ENCODE measurements at regions of chr4 and their contacts with region 1.

Region 1: GRCh38 chr4:48681856-48682255 is 98.2 kb downstream of the FRYL start:
- DNase-seq: peak in 4 of 14 experiments; percentile 29 to 62 (median 57)
- ATAC-seq: peak; percentile 68
- H3K4me3 ChIP-seq: no peak overlapping the region
- H3K4me3 Mint-ChIP-seq: no peak overlapping the region
- H3K27ac ChIP-seq: no peak overlapping the region
- H3K27ac Mint-ChIP-seq: peak overlapping the region; percentile 35
- H3K4me1 ChIP-seq: no peaks in the 10 kb centered on the region
- H3K4me1 Mint-ChIP-seq: peaks cover 51% of the 10 kb centered on the region
- H3K27me3 ChIP-seq: no peaks in the 10 kb centered on the region
- H3K27me3 Mint-ChIP-seq: no peaks in the 10 kb centered on the region
- CTCF ChIP-seq: peak; percentile 47

Region 2: GRCh38 chr4:48578132-48578968 is 103.5 kb before region 1 on chr4:
- CTCF ChIA-PET with region 1: interaction called, 12 read pairs
- POLR2A ChIA-PET with region 1: no interaction called
- intact Hi-C with region 1: loop called (anchors 1 to 2 kb)
- DNase-seq: peak in 13 of 14 experiments; percentile 4 to 79 (median 34)
- ATAC-seq: peak; percentile 97
- H3K4me3 ChIP-seq: no peak overlapping the region
- H3K4me3 Mint-ChIP-seq: no peak overlapping the region
- H3K27ac ChIP-seq: no peak overlapping the region
- H3K27ac Mint-ChIP-seq: peak overlapping the region; percentile 1
- H3K4me1 ChIP-seq: no peaks in the 10 kb centered on the region
- H3K4me1 Mint-ChIP-seq: no peaks in the 10 kb centered on the region
- H3K27me3 ChIP-seq: no peaks in the 10 kb centered on the region
- H3K27me3 Mint-ChIP-seq: no peaks in the 10 kb centered on the region
- CTCF ChIP-seq: peak; percentile 95